ENCODE measurements at regions of chr6 and their contacts with region 1.

Region 1: DNA sequence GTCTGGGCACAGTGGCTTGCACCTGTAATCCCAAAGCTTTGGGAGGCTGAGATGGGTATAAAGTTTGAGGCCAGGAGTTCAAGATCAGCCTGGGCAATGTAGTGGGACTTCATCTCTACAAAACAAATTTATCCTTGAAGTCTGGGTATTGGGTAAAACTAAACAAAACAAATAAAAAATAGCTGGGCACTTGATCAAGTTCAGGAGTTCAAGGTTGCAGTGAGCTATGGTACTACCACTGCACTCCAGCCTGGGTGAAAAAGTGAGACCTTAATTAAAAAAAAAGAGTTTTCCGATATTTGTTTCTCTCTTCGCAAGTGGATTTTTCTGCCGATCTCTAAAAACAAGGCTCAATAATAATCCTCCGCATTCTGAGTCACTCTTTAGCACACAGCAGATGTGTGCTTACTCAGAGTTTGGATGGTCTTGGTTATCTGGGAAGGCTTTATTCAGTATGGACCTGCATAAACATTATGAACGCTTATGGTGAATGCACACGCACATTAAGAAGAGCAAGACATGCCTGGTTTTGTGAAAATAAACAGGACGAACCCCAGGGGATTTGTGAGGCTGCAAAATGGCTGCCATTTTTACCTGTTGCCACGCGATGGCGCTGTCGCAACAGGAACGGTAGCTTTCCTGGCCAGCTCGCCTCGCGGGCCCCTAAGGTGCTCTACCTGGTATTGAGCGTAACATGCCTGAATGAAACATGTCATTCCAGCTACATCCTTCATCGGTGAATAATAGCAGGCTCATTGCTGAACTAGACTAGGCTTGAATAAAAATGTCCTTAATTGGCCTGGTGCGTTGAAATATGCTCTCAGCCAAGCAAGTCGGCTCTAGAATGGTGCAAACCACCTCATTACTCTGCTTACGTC is 6.0 kb downstream of the OPN5 start:
- DNase-seq: peak; percentile 35 to 65
- ATAC-seq: peak; percentile 48 to 81 (median 68)
- H3K4me3 ChIP-seq: peak overlapping the region; percentile 31
- H3K27ac ChIP-seq: no peak overlapping the region
- H3K4me1 ChIP-seq: no peaks in the 10 kb centered on the region
- H3K27me3 ChIP-seq: peaks cover 0 to 3% (median 0%) of the 10 kb centered on the region in 3 donors
- CTCF ChIP-seq: peak; percentile 86

Region 2: DNA sequence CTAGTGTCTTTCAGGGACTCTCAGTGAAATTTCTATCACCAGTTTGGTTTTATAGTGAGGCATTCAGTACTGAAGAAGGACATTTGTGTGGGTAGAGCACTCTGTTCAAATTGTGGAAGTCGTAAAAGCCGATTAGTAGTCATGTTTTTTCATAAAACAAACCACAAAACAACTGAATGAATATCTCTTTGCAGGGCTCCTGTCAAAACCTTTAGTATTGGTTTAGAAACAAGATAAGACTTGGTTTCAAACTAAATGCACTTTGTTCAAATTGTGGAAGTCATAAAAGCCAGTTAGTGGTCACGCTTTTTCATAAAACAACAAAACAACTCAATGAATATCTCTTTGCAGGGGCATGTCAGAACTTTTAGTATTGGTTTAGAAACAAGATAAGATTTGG is 65.7 kb before region 1 on chr6:
- intact Hi-C with region 1: no loop called
- DNase-seq: no peak
- ATAC-seq: no peak
- H3K4me3 ChIP-seq: no peak overlapping the region
- H3K27ac ChIP-seq: no peak overlapping the region
- H3K4me1 ChIP-seq: no peaks in the 10 kb centered on the region
- H3K27me3 ChIP-seq: no peaks in the 10 kb centered on the region
- CTCF ChIP-seq: no peak

Region 3: GRCh38 chr6:48765352-48765961 is 977.6 kb after region 1 on chr6:
- intact Hi-C with region 1: loop called in 1 of 2 experiments (anchors 10 kb)
- DNase-seq: no peak
- ATAC-seq: no peak
- H3K4me3 ChIP-seq: no peak overlapping the region
- H3K27ac ChIP-seq: no peak overlapping the region
- H3K4me1 ChIP-seq: no peaks in the 10 kb centered on the region
- H3K27me3 ChIP-seq: no peaks in the 10 kb centered on the region
- CTCF ChIP-seq: peak; percentile 5

Region 4: DNA sequence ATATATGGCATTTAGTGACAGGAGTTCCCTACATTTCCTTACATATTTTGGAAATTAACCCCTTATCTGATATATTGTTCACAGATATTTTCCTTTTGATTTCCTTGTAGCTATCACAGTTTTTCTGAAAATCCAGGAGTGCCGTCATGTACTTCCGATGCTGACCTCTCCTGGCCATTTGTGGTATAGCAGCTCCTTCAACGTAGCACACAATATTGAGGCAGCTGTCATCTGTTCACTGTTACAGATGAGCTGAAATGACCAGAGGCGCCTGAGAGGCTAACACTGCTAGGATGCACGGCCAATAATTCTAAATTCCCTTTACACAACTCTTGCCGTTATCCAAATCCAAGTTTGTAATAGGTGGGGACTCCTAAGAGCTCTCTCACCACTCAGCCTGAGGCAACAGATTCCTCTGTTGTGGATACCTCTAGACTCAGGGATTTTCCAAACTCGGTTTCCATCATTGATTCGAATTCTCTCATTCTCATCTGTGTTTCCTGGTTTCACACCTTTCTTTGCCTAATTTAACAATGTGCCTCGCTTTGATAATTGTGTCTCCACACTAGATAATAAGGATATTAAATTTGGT is 1622.2 kb after region 1 on chr6:
- intact Hi-C with region 1: loop called (anchors 2 to 5 kb)
- DNase-seq: peak; percentile 37 to 54
- ATAC-seq: peak; percentile 53 to 73 (median 70)
- H3K4me3 ChIP-seq: no peak overlapping the region
- H3K27ac ChIP-seq: no peak overlapping the region
- H3K4me1 ChIP-seq: no peaks in the 10 kb centered on the region
- H3K27me3 ChIP-seq: no peaks in the 10 kb centered on the region
- CTCF ChIP-seq: peak; percentile 69